ENCODE measurements at regions of chr12 and their contacts with region 1.

Region 1: GRCh38 chr12:91877022-91877421 is 268.6 kb downstream of the BTG1 start:
- DNase-seq: peak; percentile 89
- H3K4me3 Mint-ChIP-seq: peak overlapping the region; percentile 58
- H3K27ac Mint-ChIP-seq: peak overlapping the region; percentile 95
- H3K4me1 Mint-ChIP-seq: peaks cover 54% of the 10 kb centered on the region
- H3K27me3 Mint-ChIP-seq: no peaks in the 10 kb centered on the region

Region 2: DNA sequence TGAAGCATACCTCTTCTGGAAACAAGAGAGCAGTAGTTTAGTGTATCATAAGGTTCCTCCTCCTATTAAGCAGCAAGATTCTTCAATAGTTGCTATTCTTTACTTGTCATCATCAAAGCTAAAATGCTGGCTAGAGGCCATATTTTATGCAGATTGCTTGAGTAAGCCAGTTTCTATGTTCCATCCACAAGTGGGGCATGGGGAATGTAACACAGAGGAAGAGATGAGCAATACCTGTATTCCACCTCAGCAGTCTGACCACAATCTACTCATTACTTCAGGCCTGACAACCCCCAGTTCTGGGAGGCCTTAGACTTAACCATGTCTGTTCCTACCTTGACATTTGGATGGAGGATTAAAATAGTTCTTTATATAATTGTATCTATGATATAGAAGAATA is 154.9 kb before region 1 on chr12:
- CTCF ChIA-PET with region 1: no interaction called
- POLR2A ChIA-PET with region 1: no interaction called
- DNase-seq: no peak
- H3K4me3 Mint-ChIP-seq: no peak overlapping the region
- H3K27ac Mint-ChIP-seq: no peak overlapping the region
- H3K4me1 Mint-ChIP-seq: no peaks in the 10 kb centered on the region
- H3K27me3 Mint-ChIP-seq: no peaks in the 10 kb centered on the region

Region 3: GRCh38 chr12:91833780-91834359 is 43.2 kb before region 1 on chr12:
- CTCF ChIA-PET with region 1: no interaction called
- POLR2A ChIA-PET with region 1: no interaction called
- DNase-seq: no peak
- H3K4me3 Mint-ChIP-seq: no peak overlapping the region
- H3K27ac Mint-ChIP-seq: no peak overlapping the region
- H3K4me1 Mint-ChIP-seq: peaks cover 5% of the 10 kb centered on the region
- H3K27me3 Mint-ChIP-seq: no peaks in the 10 kb centered on the region

Region 4: GRCh38 chr12:91866566-91866965 is 10.5 kb before region 1 on chr12:
- CTCF ChIA-PET with region 1: interaction called, 15 read pairs
- POLR2A ChIA-PET with region 1: no interaction called
- DNase-seq: no peak
- H3K4me3 Mint-ChIP-seq: no peak overlapping the region
- H3K27ac Mint-ChIP-seq: no peak overlapping the region
- H3K4me1 Mint-ChIP-seq: peaks cover 13% of the 10 kb centered on the region
- H3K27me3 Mint-ChIP-seq: no peaks in the 10 kb centered on the region

Measured in activated CD4-positive, alpha-beta T cell treated with anti-CD3 and anti-CD28 coated beads, Interleukin-2, amount 10 ng/mL, durations not matched to agents 7 days and 5 days (primary cell).